Naive thymus-derived CD4-positive, alpha-beta T cell (primary cell): ENCODE measurements at regions of chr1 and their contacts with region 1.

Region 1: DNA sequence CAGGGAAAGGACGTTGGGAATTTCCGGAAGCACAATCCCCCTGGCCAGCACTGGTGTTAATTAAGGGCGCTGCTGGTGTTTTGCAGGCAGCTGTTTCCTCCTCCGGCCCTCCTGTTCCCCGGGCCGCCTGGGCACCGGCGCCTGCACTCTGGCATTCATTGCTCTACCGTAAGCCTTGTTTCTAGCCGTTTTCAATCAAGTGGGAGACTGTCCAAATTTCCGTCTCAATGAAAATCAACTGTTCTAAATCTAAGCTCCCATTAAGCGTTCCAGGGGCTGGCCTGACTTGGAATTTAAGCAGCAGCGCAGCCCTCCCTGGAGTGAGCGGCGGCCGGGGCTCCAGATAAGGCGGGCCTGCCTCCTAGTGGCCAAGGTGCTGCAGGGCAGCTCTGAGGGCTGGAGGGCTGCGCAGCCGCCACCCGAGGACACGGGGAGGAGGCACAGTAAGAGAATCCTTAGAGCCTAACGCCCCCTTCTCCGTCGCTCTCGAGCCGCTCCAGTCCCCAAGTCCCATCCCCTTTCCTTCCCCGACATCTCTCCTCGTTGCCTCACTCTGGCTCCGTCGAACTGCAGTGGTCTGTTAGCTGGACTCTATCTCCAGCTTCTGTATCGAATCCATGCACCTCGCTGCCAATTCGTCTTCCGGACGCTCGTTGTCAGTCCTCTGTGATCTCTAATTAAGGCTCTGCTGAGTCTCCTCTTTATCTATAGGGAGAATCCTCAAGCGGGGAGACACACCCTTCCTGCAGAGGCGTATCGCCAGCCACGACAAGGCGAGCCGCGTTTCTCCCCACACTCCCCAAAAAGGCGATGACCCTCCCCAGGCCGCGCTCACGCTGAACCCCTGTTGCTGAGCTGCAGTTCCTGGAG is 57.8 kb upstream of the LRRC8D start:
- DNase-seq: peak; percentile 76 to 88 (median 84)
- ATAC-seq: peak; percentile 100
- H3K4me3 ChIP-seq: peak overlapping the region; percentile 59
- H3K4me3 Mint-ChIP-seq: peak overlapping the region; percentile 76 to 96 (median 91)
- H3K27ac ChIP-seq: peak overlapping the region; percentile 50
- H3K27ac Mint-ChIP-seq: peak overlapping the region; percentile 76 to 95 (median 89)
- H3K4me1 ChIP-seq: peaks cover 18 to 37% of the 10 kb centered on the region in 2 donors
- H3K4me1 Mint-ChIP-seq: peaks cover 34 to 57% (median 55%) of the 10 kb centered on the region in 7 donors
- H3K27me3 ChIP-seq: no peaks in the 10 kb centered on the region
- H3K27me3 Mint-ChIP-seq: peaks cover 0 to 4% (median 0%) of the 10 kb centered on the region in 5 donors

Region 2: DNA sequence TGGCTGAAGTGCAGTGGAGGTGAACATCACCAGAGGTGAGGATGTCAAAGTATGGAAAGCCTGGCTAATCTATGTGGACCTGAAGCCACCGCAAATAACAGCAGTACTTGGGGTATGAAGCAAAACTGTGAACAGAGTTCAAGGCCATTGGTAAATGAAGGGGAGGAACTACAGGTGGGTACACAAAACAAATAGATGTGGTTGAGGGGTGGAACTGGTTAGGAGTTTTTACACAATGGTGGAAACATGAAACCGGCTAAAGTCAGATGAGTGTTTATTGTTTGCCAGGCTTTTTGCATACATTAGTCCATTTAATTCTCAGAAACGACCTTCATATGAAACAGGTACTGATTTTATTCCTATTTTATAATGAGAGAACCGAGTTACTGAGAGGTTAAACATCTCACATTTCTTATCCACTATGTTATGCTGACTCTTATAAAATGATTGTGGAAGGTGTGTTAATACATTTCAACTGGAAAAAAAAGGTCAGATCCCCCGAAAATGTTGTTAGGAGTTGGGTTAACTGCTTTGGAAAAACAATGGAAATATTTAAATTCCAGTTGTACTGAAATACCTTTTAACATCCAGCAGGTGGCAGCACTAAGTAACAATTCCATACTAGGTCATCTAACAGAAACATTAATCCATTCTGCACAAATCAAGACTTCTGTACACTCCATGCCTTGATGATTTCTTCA is 827.3 kb before region 1 on chr1:
- CTCF ChIA-PET with region 1: no interaction called
- POLR2A ChIA-PET with region 1: no interaction called
- intact Hi-C with region 1: no loop called
- DNase-seq: peak in 6 of 9 donors; percentile 15 to 41 (median 32)
- ATAC-seq: peak; percentile 48
- H3K4me3 ChIP-seq: no peak overlapping the region
- H3K4me3 Mint-ChIP-seq: no peak overlapping the region
- H3K27ac ChIP-seq: no peak overlapping the region
- H3K27ac Mint-ChIP-seq: peak overlapping the region in 1 of 9 donors; percentile 45
- H3K4me1 ChIP-seq: no peaks in the 10 kb centered on the region
- H3K4me1 Mint-ChIP-seq: peaks cover 0 to 11% (median 9%) of the 10 kb centered on the region in 7 donors
- H3K27me3 ChIP-seq: no peaks in the 10 kb centered on the region
- H3K27me3 Mint-ChIP-seq: no peaks in the 10 kb centered on the region

Region 3: DNA sequence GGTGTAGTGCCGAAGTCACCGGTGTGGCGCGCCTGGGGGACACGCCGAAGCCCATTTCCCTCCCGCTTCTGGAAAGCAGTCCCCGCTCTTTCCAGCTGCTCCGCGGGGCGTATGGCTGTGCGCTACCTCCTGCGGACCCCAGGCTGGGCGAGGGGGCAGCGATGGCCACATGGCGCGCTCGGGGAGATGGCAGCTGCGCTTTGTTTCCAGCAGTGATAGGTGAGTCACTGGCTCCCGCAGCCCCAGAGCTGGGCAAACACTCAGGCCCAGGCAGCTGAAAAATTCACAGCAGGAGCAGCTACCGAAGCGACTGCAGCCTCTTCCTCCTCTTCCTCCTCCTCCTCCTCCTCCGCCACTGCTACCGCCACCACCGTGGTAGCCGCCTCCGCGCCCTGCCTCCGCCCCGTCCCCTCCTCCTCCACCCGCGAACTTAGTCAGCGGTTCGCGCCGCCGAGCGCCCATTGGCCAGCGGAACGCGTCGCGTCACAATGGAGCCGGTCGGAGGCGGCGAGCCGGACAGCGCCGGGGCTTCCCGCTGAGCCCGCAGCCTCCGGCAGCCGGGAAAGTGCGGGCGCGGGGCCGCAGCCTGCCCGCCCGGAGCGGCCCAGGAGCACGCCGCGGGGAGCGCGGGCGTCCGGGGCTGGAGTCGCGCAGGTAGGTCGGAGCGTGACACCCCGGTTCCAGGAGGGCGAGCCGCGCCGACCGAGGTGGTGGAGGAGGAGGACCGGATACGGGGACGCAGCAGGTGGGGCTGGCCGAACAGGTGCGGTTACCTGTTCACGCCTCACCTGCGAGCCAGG is 238.4 kb before region 1 on chr1 and contains the start of gene LRRC8B:
- CTCF ChIA-PET with region 1: interaction called, 7 read pairs
- POLR2A ChIA-PET with region 1: interaction called, 6 read pairs
- intact Hi-C with region 1: loop called (anchors 1 kb)
- DNase-seq: peak; percentile 80 to 91 (median 86)
- ATAC-seq: peak; percentile 94
- H3K4me3 ChIP-seq: peak within 1 kb of the TSS; percentile 93
- H3K4me3 Mint-ChIP-seq: peak within 1 kb of the TSS in 1 of 10 donors; percentile 76
- H3K27ac ChIP-seq: peak within 1 kb of the TSS; percentile 92
- H3K27ac Mint-ChIP-seq: peak within 1 kb of the TSS in 8 of 9 donors; percentile 89 to 97 (median 94)
- H3K4me1 ChIP-seq: peaks cover 7 to 34% of the 10 kb centered on the region in 2 donors
- H3K4me1 Mint-ChIP-seq: peaks cover 11 to 31% (median 21%) of the 10 kb centered on the region in 7 donors
- H3K27me3 ChIP-seq: no peaks in the 10 kb centered on the region
- H3K27me3 Mint-ChIP-seq: no peaks in the 10 kb centered on the region
- total RNA-seq, gene LRRC8B: 8.8 to 23.0 (median 17.1) TPM

Region 4: GRCh38 chr1:89605692-89606091 is 157.3 kb before region 1 on chr1:
- CTCF ChIA-PET with region 1: interaction called, 34 read pairs
- POLR2A ChIA-PET with region 1: interaction called, 81 read pairs
- intact Hi-C with region 1: loop called (anchors 1 to 2 kb)
- DNase-seq: no peak
- ATAC-seq: no peak
- H3K4me3 ChIP-seq: peak overlapping the region; percentile 17
- H3K4me3 Mint-ChIP-seq: peak overlapping the region in 8 of 10 donors; percentile 52 to 96 (median 88)
- H3K27ac ChIP-seq: peak overlapping the region; percentile 92
- H3K27ac Mint-ChIP-seq: peak overlapping the region; percentile 97 to 100 (median 99)
- H3K4me1 ChIP-seq: peaks cover 82 to 85% of the 10 kb centered on the region in 2 donors
- H3K4me1 Mint-ChIP-seq: peaks cover 44 to 96% (median 93%) of the 10 kb centered on the region in 7 donors
- H3K27me3 ChIP-seq: no peaks in the 10 kb centered on the region
- H3K27me3 Mint-ChIP-seq: no peaks in the 10 kb centered on the region

Region 5: DNA sequence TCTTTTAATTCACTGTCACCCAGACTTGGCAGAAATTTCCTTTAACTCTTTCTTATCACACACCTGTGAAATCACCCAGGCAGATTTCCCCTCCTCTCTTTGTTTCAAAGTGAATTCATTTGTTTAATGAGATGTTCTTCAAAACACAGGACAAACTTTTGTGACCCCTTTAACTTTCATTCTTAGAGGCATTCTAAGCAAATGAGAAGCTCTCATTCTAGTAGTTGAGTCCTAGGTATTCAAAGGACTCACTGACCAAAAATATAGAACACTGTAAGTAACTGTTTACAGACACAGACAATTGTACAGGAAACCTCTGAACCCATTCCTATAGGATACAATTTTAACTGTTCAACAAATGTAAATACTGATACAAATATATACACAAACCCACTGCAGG is 113.2 kb before region 1 on chr1:
- CTCF ChIA-PET with region 1: interaction called, 15 read pairs
- POLR2A ChIA-PET with region 1: interaction called, 4 read pairs
- intact Hi-C with region 1: no loop called
- DNase-seq: no peak
- ATAC-seq: no peak
- H3K4me3 ChIP-seq: no peak overlapping the region
- H3K4me3 Mint-ChIP-seq: peak overlapping the region; percentile 1 to 63 (median 48)
- H3K27ac ChIP-seq: no peak overlapping the region
- H3K27ac Mint-ChIP-seq: peak overlapping the region; percentile 2 to 92 (median 68)
- H3K4me1 ChIP-seq: peaks cover 36 to 52% of the 10 kb centered on the region in 2 donors
- H3K4me1 Mint-ChIP-seq: peaks cover 38 to 78% (median 72%) of the 10 kb centered on the region in 7 donors
- H3K27me3 ChIP-seq: no peaks in the 10 kb centered on the region
- H3K27me3 Mint-ChIP-seq: no peaks in the 10 kb centered on the region

Region 6: GRCh38 chr1:89698624-89699023 is 64.4 kb before region 1 on chr1:
- CTCF ChIA-PET with region 1: interaction called, 10 read pairs
- POLR2A ChIA-PET with region 1: interaction called, 6 read pairs
- intact Hi-C with region 1: loop called (anchors 2 to 5 kb)
- DNase-seq: peak in 2 of 9 donors; percentile 21 to 28
- ATAC-seq: peak; percentile 59
- H3K4me3 ChIP-seq: peak overlapping the region; percentile 15
- H3K4me3 Mint-ChIP-seq: peak overlapping the region in 9 of 10 donors; percentile 52 to 82 (median 65)
- H3K27ac ChIP-seq: peak overlapping the region; percentile 34
- H3K27ac Mint-ChIP-seq: peak overlapping the region; percentile 73 to 89 (median 87)
- H3K4me1 ChIP-seq: peaks cover 45 to 67% of the 10 kb centered on the region in 2 donors
- H3K4me1 Mint-ChIP-seq: peaks cover 50 to 93% (median 82%) of the 10 kb centered on the region in 7 donors
- H3K27me3 ChIP-seq: no peaks in the 10 kb centered on the region
- H3K27me3 Mint-ChIP-seq: no peaks in the 10 kb centered on the region

Region 7: DNA sequence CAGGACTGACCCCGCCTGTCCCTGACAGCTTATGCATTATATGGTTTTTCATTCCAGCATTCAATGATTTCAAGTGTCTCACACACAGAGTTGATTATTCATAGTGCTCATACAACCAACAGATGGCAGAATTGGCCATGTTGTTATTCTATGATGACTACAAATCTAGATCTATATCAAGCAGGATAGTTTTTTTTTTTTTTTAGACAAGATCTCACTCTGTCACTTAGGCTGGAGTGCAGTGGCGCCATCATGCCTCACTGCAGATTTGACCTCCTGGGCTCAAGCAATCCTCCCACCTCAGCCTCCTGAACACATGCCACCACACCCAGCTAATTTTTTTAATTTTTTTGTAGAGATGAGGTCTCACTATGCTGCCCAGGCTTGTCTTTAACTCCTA is 17.7 kb after region 1 on chr1:
- CTCF ChIA-PET with region 1: interaction called, 15 read pairs
- POLR2A ChIA-PET with region 1: no interaction called
- intact Hi-C with region 1: no loop called
- DNase-seq: peak in 5 of 9 donors; percentile 38 to 56 (median 41)
- ATAC-seq: peak; percentile 80
- H3K4me3 ChIP-seq: no peak overlapping the region
- H3K4me3 Mint-ChIP-seq: peak overlapping the region in 2 of 10 donors; percentile 5 to 26
- H3K27ac ChIP-seq: no peak overlapping the region
- H3K27ac Mint-ChIP-seq: peak overlapping the region in 2 of 9 donors; percentile 34 to 53
- H3K4me1 ChIP-seq: peaks cover 0 to 13% of the 10 kb centered on the region in 2 donors
- H3K4me1 Mint-ChIP-seq: peaks cover 17 to 30% (median 27%) of the 10 kb centered on the region in 7 donors
- H3K27me3 ChIP-seq: no peaks in the 10 kb centered on the region
- H3K27me3 Mint-ChIP-seq: no peaks in the 10 kb centered on the region

Region 8: GRCh38 chr1:89808448-89809117 is 45.6 kb after region 1 on chr1:
- CTCF ChIA-PET with region 1: no interaction called
- POLR2A ChIA-PET with region 1: no interaction called
- intact Hi-C with region 1: no loop called
- DNase-seq: no peak
- ATAC-seq: no peak
- H3K4me3 ChIP-seq: no peak overlapping the region
- H3K4me3 Mint-ChIP-seq: no peak overlapping the region
- H3K27ac ChIP-seq: no peak overlapping the region
- H3K27ac Mint-ChIP-seq: no peak overlapping the region
- H3K4me1 ChIP-seq: no peaks in the 10 kb centered on the region
- H3K4me1 Mint-ChIP-seq: peaks cover 0 to 2% (median 0%) of the 10 kb centered on the region in 7 donors
- H3K27me3 ChIP-seq: no peaks in the 10 kb centered on the region
- H3K27me3 Mint-ChIP-seq: peaks cover 6 to 19% (median 9%) of the 10 kb centered on the region in 5 donors

Region 9: DNA sequence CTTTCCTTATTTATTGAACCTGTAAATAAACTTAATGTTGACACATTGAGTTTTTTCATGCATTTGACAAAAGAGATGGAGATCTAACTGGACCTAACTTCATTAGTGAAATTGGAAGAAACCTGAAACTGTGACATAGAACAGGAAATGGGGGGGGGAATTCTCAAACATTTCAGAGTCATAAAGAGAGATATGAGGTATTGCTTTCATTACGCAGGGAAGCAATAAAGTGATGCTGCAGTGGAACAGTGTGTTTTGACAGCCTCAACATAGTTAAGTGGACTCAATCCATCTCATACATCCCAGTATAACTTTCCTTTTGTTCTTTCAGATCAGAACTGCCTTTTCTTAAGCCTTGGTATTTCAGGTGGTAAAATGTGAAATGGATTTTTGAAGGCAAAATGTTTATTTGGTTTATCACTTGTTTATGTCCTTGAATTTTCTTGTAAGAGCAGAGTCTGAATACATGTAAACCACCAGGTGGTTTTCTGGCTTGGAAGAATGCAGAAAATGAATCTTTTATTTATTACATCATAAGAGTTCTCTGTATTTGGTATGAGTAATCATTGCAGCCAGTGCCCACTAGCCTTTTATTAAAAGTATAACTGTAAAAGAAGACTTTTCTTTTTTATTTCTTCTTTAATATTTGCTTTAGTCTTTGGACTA is 364.4 kb after region 1 on chr1:
- CTCF ChIA-PET with region 1: no interaction called
- POLR2A ChIA-PET with region 1: no interaction called
- intact Hi-C with region 1: no loop called
- DNase-seq: no peak
- ATAC-seq: no peak
- H3K4me3 ChIP-seq: no peak overlapping the region
- H3K4me3 Mint-ChIP-seq: no peak overlapping the region
- H3K27ac ChIP-seq: no peak overlapping the region
- H3K27ac Mint-ChIP-seq: no peak overlapping the region
- H3K4me1 ChIP-seq: no peaks in the 10 kb centered on the region
- H3K4me1 Mint-ChIP-seq: no peaks in the 10 kb centered on the region
- H3K27me3 ChIP-seq: peaks cover 0 to 3% of the 10 kb centered on the region in 2 donors
- H3K27me3 Mint-ChIP-seq: peaks cover 8 to 45% (median 26%) of the 10 kb centered on the region in 5 donors